ENCODE measurements at regions of chr15 and their contacts with region 1.

Region 1: GRCh38 chr15:70165716-70166284 is 68.1 kb upstream of the TLE3 start:
- DNase-seq: peak; percentile 79 to 92 (median 83)
- ATAC-seq: peak; percentile 91 to 94 (median 93)
- H3K4me3 ChIP-seq: no peak overlapping the region
- H3K27ac ChIP-seq: peak overlapping the region; percentile 21 to 86 (median 77)
- H3K4me1 ChIP-seq: peaks cover 5 to 36% (median 31%) of the 10 kb centered on the region in 12 donors
- H3K27me3 ChIP-seq: peaks cover 0 to 6% (median 0%) of the 10 kb centered on the region in 9 donors
- CTCF ChIP-seq: no peak
- POLR2A ChIP-seq: no peak

Region 2: GRCh38 chr15:69583626-69584025 is 582.2 kb before region 1 on chr15:
- intact Hi-C with region 1: loop called in 1 of 10 experiments (anchors 10 kb)
- DNase-seq: peak in 1 of 5 donors; percentile 18
- ATAC-seq: peak in 2 of 4 donors; percentile 47 to 73
- H3K4me3 ChIP-seq: no peak overlapping the region
- H3K27ac ChIP-seq: peak overlapping the region in 1 of 12 donors; percentile 5
- H3K4me1 ChIP-seq: peaks cover 0 to 22% (median 0%) of the 10 kb centered on the region in 12 donors
- H3K27me3 ChIP-seq: no peaks in the 10 kb centered on the region
- CTCF ChIP-seq: no peak
- POLR2A ChIP-seq: no peak

Region 3: DNA sequence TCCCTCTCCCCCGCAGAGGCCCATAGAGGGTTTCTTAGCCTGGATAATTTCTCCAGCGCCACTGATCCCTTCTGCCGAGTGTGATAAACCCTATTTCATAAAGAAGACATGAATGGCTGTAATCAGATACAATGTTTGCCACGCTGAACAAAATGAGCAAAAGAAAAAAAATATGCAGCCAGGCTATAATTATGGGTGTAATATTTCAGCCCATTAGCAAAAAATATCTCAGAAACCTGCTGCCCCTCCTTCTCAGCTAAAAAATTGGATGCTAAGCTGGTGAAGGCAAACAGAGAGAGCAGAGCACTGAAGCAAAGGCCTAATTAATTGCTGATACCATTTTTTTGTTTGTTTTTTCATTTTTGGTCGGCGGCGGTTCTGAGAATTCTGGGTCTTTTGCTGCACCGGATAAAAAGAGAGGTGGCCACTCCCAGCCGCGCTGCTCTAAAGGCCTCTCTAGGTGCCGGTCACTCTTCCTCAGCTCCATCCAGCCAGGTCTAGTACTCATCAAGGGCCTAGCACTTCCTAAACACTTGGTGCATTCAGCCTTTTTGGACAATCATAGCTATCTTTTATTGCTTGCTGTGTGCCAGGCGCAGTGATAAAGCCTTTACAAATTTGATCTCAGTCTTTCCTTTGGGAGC is 60.7 kb after region 1 on chr15:
- intact Hi-C with region 1: loop called in 1 of 10 experiments (anchors 10 kb)
- DNase-seq: no peak
- ATAC-seq: no peak
- H3K4me3 ChIP-seq: no peak overlapping the region
- H3K27ac ChIP-seq: no peak overlapping the region
- H3K4me1 ChIP-seq: no peaks in the 10 kb centered on the region
- H3K27me3 ChIP-seq: peaks cover 0 to 3% (median 0%) of the 10 kb centered on the region in 9 donors
- CTCF ChIP-seq: no peak
- POLR2A ChIP-seq: no peak

Region 4: GRCh38 chr15:70236341-70237086 is 70.7 kb after region 1 on chr15:
- intact Hi-C with region 1: no loop called
- DNase-seq: no peak
- ATAC-seq: no peak
- H3K4me3 ChIP-seq: no peak overlapping the region
- H3K27ac ChIP-seq: no peak overlapping the region
- H3K4me1 ChIP-seq: no peaks in the 10 kb centered on the region
- H3K27me3 ChIP-seq: no peaks in the 10 kb centered on the region
- CTCF ChIP-seq: no peak
- POLR2A ChIP-seq: no peak

Region 5: DNA sequence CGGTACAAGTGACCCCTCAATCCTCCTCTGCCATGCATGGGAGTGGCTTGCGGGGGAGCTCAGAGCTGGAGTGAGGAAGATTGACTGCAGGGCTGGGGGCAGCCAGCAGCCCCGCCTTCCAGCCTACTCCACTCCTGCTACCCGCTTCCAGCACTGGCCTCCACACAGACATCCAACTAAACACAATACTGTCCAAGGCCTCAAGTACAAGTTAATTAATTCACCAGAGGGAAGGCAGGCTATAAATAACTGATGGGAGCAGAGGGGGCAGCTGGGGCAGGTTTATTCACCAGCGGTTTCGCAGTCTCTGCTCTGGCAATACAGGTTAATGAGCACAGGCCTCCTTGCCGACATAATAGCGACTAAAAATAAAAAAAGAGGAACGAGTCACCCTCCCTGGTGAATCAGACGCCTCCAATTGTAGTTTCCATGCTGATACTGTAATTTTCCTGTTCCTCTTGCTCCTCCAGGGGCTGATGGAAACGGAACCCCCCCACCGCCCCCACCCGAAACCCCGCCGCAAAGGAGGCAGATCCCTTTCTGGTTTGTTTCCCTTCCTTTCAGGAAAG is 98.3 kb after region 1 on chr15:
- intact Hi-C with region 1: loop called in 1 of 10 experiments (anchors 5 kb)
- DNase-seq: peak in 2 of 5 donors; percentile 29 to 36
- ATAC-seq: peak in 3 of 4 donors; percentile 46 to 59 (median 48)
- H3K4me3 ChIP-seq: peak overlapping the region in 1 of 12 donors; percentile 9
- H3K27ac ChIP-seq: peak overlapping the region in 5 of 12 donors; percentile 3 to 75 (median 30)
- H3K4me1 ChIP-seq: peaks cover 4 to 88% (median 42%) of the 10 kb centered on the region in 12 donors
- H3K27me3 ChIP-seq: no peaks in the 10 kb centered on the region
- CTCF ChIP-seq: no peak
- POLR2A ChIP-seq: no peak

Region 6: DNA sequence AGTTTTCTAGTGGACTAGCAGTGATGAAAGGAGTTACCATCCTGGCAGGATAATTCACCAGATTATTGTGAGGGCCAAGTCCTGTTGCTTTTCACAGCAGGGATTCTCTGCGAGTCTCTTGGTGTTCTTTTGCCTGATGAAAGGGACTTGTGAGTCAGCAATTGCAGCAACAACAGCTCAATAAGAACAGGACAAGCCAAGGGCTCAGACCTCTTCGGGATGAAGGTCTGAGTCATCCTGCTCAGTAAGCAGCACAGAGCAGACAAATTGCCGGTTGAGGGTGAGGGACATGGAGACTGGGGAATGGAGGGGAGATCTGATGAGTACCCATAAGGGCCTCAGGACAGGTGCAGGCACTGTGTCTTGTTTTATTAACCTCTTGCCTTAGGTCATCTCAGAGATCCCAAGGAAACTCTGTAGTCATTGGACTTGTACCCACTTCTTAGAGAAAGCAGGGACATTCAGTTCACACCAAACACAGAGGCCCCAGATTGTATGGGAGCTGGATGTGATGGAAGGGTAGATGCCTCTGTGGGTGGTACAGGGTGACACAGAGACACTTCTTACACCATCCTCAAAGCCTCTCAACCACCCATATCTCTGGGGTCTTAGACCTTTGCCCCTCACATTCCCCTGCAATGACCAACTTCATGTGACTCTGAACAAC is 105.8 kb after region 1 on chr15:
- intact Hi-C with region 1: loop called in 2 of 10 experiments (anchors 5 kb)
- DNase-seq: peak in 2 of 5 donors; percentile 22 to 69
- ATAC-seq: peak in 3 of 4 donors; percentile 25 to 81 (median 75)
- H3K4me3 ChIP-seq: no peak overlapping the region
- H3K27ac ChIP-seq: peak overlapping the region in 4 of 12 donors; percentile 60 to 83 (median 72)
- H3K4me1 ChIP-seq: peaks cover 8 to 61% (median 35%) of the 10 kb centered on the region in 12 donors
- H3K27me3 ChIP-seq: no peaks in the 10 kb centered on the region
- CTCF ChIP-seq: no peak
- POLR2A ChIP-seq: no peak

Region 7: DNA sequence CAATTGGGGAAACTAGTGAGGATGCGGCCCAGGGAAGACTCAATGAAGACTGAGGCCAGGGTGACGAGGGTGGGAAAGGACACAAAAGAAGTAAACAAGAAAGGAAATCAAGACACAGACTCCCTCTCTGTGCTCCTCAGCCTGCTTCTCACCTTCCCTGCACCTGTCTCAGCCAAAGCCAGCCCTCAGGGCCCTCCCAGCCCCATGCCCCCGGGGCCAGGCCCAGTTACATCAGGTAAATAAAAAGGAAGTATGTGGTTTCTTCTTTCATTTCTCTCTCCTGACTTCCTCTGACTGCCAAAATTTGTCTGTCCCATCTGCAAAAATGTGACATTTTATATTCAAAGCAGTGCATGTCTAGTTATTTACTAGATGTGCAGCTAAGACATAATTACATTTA is 269.6 kb after region 1 on chr15:
- intact Hi-C with region 1: loop called in 2 of 10 experiments (anchors 10 kb)
- DNase-seq: no peak
- ATAC-seq: no peak
- H3K4me3 ChIP-seq: no peak overlapping the region
- H3K27ac ChIP-seq: no peak overlapping the region
- H3K4me1 ChIP-seq: peaks cover 0 to 46% (median 26%) of the 10 kb centered on the region in 12 donors
- H3K27me3 ChIP-seq: no peaks in the 10 kb centered on the region
- CTCF ChIP-seq: no peak
- POLR2A ChIP-seq: no peak

Measured in heart left ventricle (tissue), 16 donors.